Activated T-helper 2 cell treated with anti-CD3 and anti-CD28 coated beads, Interferon-gamma antibody, Interleukin-2, Interleukin-4, amounts not matched to agents 10 μg/mL and 5 μg/mL and 100 μg/mL, durations not matched to agents 14 hours and 24 hours and 36 hours (primary cell): ENCODE measurements at regions of chr12 and their contacts with region 1.

Region 1: GRCh38 chr12:45192707-45193106 is 23.2 kb upstream of the ANO6 start:
- DNase-seq: no peak
- H3K4me3 Mint-ChIP-seq: no peak overlapping the region
- H3K27ac Mint-ChIP-seq: no peak overlapping the region
- H3K4me1 Mint-ChIP-seq: peaks cover 19% of the 10 kb centered on the region
- H3K27me3 Mint-ChIP-seq: no peaks in the 10 kb centered on the region

Region 2: DNA sequence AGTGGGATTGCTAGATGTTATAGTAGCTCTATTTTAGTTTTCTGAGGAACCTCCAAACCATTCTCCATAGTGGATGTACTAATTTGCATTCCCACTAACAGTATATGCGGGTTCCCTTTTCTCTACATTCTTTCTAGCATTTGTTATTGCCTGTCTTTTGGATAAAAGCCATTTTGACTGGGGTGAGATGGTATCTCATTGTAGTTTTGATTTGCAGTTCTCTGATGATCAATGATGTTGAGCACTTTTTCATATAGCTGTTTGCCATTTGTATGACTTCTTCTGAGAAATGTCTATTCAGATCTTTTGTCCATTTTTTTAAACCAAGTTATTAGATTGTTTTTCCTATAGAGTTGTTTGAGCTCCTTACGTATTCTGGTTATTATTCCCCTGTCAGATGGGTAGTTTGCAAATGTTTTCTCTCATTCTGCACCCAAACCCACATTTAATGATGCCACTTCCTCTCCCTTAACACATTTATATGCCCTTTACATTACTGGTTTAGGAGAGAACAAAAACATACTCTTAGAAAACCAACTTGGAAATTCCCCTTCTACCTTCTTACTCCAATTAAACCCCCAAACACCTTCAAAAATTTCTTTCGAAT is 364.8 kb before region 1 on chr12:
- intact Hi-C with region 1: no loop called
- DNase-seq: no peak
- H3K4me3 Mint-ChIP-seq: peak overlapping the region; percentile 30
- H3K27ac Mint-ChIP-seq: peak overlapping the region; percentile 72
- H3K4me1 Mint-ChIP-seq: peaks cover 33% of the 10 kb centered on the region
- H3K27me3 Mint-ChIP-seq: no peaks in the 10 kb centered on the region

Region 3: DNA sequence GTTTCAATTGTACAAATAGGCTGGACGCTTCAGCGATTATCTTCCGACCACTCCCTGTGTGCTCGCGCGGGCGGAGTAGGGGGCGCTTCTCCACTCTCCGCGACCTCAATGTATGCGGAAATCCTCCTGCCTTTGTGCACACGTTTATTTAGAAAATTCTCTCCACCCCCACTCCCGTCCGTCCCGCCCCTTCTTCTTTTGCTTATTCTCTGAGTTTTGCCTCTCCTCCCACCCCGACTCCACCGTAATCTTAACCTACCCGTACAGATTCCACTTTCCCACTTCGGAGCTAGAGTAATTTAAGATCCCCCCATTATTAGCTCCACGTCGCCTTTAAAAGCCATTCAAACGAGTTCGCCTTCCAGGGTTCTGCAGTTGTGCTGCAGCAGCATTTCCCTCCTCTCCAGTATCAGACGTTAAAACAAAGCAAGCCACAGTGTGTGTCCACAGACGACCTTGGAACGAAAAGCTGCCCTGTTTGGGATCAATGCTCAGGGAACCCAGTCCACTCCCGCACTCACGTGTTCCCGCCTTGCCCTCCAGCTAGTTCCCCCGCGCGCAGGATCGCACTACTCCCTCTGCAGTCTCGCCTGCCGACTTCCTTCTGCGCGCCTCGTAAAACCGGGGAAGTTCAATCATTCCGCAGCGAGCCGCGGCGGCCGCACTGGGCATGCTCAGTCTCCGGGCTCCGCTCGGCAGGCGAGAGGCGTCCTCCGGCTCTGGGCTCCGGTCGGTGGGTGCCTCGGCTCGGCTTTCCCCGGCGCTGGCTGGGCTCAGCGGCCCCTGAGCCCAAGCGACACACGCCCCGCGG is 22.9 kb after region 1 on chr12 and contains the start of gene ANO6:
- intact Hi-C with region 1: loop called (anchors 1 kb)
- DNase-seq: peak; percentile 74
- H3K4me3 Mint-ChIP-seq: peak within 1 kb of the TSS; percentile 97
- H3K27ac Mint-ChIP-seq: peak within 1 kb of the TSS; percentile 95
- H3K4me1 Mint-ChIP-seq: peaks cover 34% of the 10 kb centered on the region
- H3K27me3 Mint-ChIP-seq: no peaks in the 10 kb centered on the region
- total RNA-seq, gene ANO6: 25.2 and 25.7 TPM in 2 replicates

Region 4: GRCh38 chr12:45670346-45671065 is 477.8 kb after region 1 on chr12:
- intact Hi-C with region 1: loop called (anchors 2 kb)
- DNase-seq: peak; percentile 11
- H3K4me3 Mint-ChIP-seq: no peak overlapping the region
- H3K27ac Mint-ChIP-seq: no peak overlapping the region
- H3K4me1 Mint-ChIP-seq: peaks cover 31% of the 10 kb centered on the region
- H3K27me3 Mint-ChIP-seq: peaks cover 20% of the 10 kb centered on the region